ENCODE measurements at regions of chr6 and their contacts with region 1.

Region 1: GRCh38 chr6:137589067-137589848 is 95.1 kb upstream of the OLIG3 start:
- DNase-seq: peak; percentile 51
- H3K4me3 Mint-ChIP-seq: no peak overlapping the region
- H3K27ac Mint-ChIP-seq: no peak overlapping the region
- H3K4me1 Mint-ChIP-seq: peaks cover 8% of the 10 kb centered on the region
- H3K27me3 Mint-ChIP-seq: peaks cover 22% of the 10 kb centered on the region

Region 2: GRCh38 chr6:137497721-137498463 is 91.4 kb before region 1 on chr6:
- intact Hi-C with region 1: loop called (anchors 5 kb)
- DNase-seq: no peak
- H3K4me3 Mint-ChIP-seq: no peak overlapping the region
- H3K27ac Mint-ChIP-seq: no peak overlapping the region
- H3K4me1 Mint-ChIP-seq: peaks cover 28% of the 10 kb centered on the region
- H3K27me3 Mint-ChIP-seq: peaks cover 82% of the 10 kb centered on the region

Measured in activated T-helper 2 cell treated with anti-CD3 and anti-CD28 coated beads, Interferon-gamma antibody, Interleukin-2, Interleukin-4, amounts not matched to agents 10 μg/mL and 5 μg/mL and 100 μg/mL, durations not matched to agents 14 hours and 24 hours and 36 hours (primary cell).